Activated naive CD4-positive, alpha-beta T cell treated with anti-CD3 and anti-CD28 coated beads for 36 hours (primary cell): ENCODE measurements at regions of chr1 and their contacts with region 1.

Region 1: DNA sequence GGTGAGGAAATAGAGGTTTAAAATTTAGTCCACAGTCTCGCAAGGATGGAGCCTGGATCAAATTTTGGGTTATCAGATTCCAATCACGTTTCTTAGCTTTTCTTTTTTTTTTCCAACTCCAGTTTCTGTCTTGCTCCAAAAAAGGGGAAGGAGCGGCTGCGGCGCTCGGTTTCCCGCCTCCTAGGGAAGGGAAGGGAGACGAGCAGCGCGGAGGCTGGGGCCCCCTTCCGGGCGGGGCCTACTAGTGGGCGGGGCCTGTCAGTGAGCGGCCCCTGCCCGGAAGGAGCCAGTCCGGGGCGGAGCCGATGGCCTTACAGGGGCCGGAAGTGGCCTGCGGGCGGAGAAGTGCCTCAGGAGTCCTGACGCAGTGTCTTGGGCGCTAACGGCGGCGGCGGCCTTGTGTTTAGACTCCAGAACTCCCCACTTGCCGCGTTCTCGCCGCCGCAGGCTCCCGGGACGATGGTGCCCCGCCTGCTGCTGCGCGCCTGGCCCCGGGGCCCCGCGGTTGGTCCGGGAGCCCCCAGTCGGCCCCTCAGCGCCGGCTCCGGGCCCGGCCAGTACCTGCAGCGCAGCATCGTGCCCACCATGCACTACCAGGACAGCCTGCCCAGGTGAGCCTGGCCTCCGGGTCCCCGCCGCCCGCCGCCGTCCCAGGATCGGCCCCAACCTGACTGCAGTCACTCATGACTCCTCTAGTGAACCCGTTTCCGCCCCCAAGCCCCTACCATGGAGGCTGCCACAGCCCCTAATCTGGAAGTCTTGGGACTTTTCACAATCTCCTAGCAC is at the start of gene CPT2:
- DNase-seq: peak; percentile 94
- H3K4me3 Mint-ChIP-seq: peak within 1 kb of the TSS; percentile 96
- H3K27ac Mint-ChIP-seq: peak within 1 kb of the TSS; percentile 97
- H3K4me1 Mint-ChIP-seq: peaks cover 21% of the 10 kb centered on the region
- H3K27me3 Mint-ChIP-seq: no peaks in the 10 kb centered on the region
- total RNA-seq, gene CPT2: 11.3 to 13.8 TPM

Region 2: DNA sequence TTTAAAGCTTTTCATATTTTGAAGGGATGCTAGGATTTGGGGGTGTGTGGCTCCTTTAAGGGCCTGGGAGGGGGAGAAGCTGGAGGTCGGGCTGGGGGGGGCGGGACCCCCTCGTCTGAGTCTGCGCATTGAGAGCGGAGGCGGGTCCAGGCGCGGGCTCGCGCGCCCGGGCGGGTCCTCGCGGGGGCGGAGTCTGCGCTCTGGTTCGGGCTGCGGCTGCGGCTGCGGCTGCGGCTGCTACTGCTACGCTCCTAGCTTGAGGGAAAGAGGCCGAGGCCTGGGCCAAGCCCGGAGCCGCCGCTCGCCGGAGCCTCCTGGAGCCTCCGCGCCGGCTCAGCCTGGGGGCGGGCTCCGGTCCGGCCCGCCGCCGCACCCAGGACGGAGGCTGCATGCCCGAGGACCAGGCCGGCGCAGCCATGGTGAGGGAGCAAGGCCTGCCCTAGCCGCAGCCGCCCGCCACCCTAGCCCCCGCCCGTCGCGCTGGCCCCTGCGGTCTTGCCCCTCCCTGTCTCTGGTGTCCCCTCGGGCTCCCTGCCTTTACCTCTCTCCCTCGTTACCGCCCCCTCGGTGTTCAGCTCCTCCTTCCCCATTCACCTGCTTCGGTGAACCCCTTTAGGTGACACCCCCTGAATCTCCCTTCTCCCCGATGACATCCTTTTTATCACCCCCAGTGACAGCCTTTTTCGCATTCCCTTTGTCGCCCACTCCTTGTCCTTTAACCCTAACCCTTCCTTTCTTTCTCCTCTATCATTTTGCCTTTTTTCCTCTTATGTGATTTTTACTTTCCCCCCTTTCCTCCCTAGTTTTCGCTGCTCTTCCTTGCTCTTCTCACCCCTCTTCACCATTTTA is 470.2 kb before region 1 on chr1 and contains the start of gene ZYG11B:
- CTCF ChIA-PET with region 1: no interaction called
- intact Hi-C with region 1: loop called (anchors 1 kb)
- DNase-seq: peak; percentile 91
- H3K4me3 Mint-ChIP-seq: peak within 1 kb of the TSS; percentile 85
- H3K27ac Mint-ChIP-seq: peak within 1 kb of the TSS; percentile 55
- H3K4me1 Mint-ChIP-seq: peaks cover 33% of the 10 kb centered on the region
- H3K27me3 Mint-ChIP-seq: no peaks in the 10 kb centered on the region
- total RNA-seq, gene ZYG11B: 10.7 to 11.6 TPM

Region 3: GRCh38 chr1:53014791-53015507 is 181.7 kb before region 1 on chr1:
- CTCF ChIA-PET with region 1: no interaction called
- intact Hi-C with region 1: loop called (anchors 2 kb)
- DNase-seq: peak; percentile 91
- H3K4me3 Mint-ChIP-seq: peak overlapping the region; percentile 78
- H3K27ac Mint-ChIP-seq: peak overlapping the region; percentile 60
- H3K4me1 Mint-ChIP-seq: peaks cover 20% of the 10 kb centered on the region
- H3K27me3 Mint-ChIP-seq: no peaks in the 10 kb centered on the region

Region 4: GRCh38 chr1:53220171-53220961 is 23.7 kb after region 1 on chr1 and contains the start of gene CZIB:
- CTCF ChIA-PET with region 1: no interaction called
- intact Hi-C with region 1: loop called (anchors 1 kb)
- DNase-seq: peak; percentile 96
- H3K4me3 Mint-ChIP-seq: peak within 1 kb of the TSS; percentile 91
- H3K27ac Mint-ChIP-seq: peak within 1 kb of the TSS; percentile 95
- H3K4me1 Mint-ChIP-seq: peaks cover 24% of the 10 kb centered on the region
- H3K27me3 Mint-ChIP-seq: no peaks in the 10 kb centered on the region
- total RNA-seq, gene CZIB: 44.4 to 45.6 TPM

Region 5: GRCh38 chr1:53413175-53414001 is 216.7 kb after region 1 on chr1:
- CTCF ChIA-PET with region 1: no interaction called
- intact Hi-C with region 1: loop called (anchors 5 kb)
- DNase-seq: peak; percentile 66
- H3K4me3 Mint-ChIP-seq: no peak overlapping the region
- H3K27ac Mint-ChIP-seq: peak overlapping the region; percentile 79
- H3K4me1 Mint-ChIP-seq: peaks cover 32% of the 10 kb centered on the region
- H3K27me3 Mint-ChIP-seq: no peaks in the 10 kb centered on the region